A673 (cell line): ENCODE measurements at regions of chr12 and their contacts with region 1.

Region 1: GRCh38 chr12:70733385-70733784 is 96.2 kb upstream of the PTPRB start:
- DNase-seq: peak; percentile 88
- H3K4me3 ChIP-seq: no peak overlapping the region
- H3K27ac ChIP-seq: no peak overlapping the region
- H3K4me1 ChIP-seq: peaks cover 8% of the 10 kb centered on the region
- H3K27me3 ChIP-seq: no peaks in the 10 kb centered on the region
- CTCF ChIP-seq: peak; percentile 80

Region 2: DNA sequence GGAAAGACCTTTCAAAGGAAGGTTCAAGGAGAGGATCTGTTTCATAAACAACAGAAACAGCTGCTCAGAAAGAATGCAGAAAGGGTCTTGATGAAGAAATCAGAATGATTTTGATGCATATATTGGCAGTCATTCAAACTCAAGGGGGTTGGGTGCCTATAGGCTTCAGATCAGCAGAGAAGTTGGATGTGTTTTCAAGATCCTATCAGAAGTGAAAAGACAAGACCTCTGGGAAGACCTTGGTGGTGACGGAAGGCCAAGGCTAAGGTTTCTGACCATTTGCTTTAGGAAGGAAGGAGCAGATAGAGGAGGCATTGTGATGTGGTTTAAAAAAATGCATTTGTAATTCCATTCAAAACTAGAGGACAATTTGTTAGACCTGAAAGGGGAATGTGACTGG is 80.9 kb before region 1 on chr12:
- CTCF ChIA-PET with region 1: no interaction called
- POLR2A ChIA-PET with region 1: no interaction called
- intact Hi-C with region 1: no loop called
- DNase-seq: no peak
- H3K4me3 ChIP-seq: no peak overlapping the region
- H3K27ac ChIP-seq: no peak overlapping the region
- H3K4me1 ChIP-seq: no peaks in the 10 kb centered on the region
- H3K27me3 ChIP-seq: no peaks in the 10 kb centered on the region
- CTCF ChIP-seq: no peak

Region 3: GRCh38 chr12:70849265-70849960 is 116.0 kb after region 1 on chr12:
- CTCF ChIA-PET with region 1: interaction called, 3 read pairs
- POLR2A ChIA-PET with region 1: no interaction called
- intact Hi-C with region 1: loop called (anchors 2 kb)
- DNase-seq: peak; percentile 55
- H3K4me3 ChIP-seq: no peak overlapping the region
- H3K27ac ChIP-seq: no peak overlapping the region
- H3K4me1 ChIP-seq: peaks cover 29% of the 10 kb centered on the region
- H3K27me3 ChIP-seq: no peaks in the 10 kb centered on the region
- CTCF ChIP-seq: peak; percentile 71

Region 4: GRCh38 chr12:71194657-71195056 is 461.3 kb after region 1 on chr12:
- CTCF ChIA-PET with region 1: no interaction called
- POLR2A ChIA-PET with region 1: no interaction called
- intact Hi-C with region 1: loop called (anchors 2 kb)
- DNase-seq: peak; percentile 26
- H3K4me3 ChIP-seq: no peak overlapping the region
- H3K27ac ChIP-seq: peak overlapping the region; percentile 98
- H3K4me1 ChIP-seq: peaks cover 66% of the 10 kb centered on the region
- H3K27me3 ChIP-seq: no peaks in the 10 kb centered on the region
- CTCF ChIP-seq: no peak

Region 5: DNA sequence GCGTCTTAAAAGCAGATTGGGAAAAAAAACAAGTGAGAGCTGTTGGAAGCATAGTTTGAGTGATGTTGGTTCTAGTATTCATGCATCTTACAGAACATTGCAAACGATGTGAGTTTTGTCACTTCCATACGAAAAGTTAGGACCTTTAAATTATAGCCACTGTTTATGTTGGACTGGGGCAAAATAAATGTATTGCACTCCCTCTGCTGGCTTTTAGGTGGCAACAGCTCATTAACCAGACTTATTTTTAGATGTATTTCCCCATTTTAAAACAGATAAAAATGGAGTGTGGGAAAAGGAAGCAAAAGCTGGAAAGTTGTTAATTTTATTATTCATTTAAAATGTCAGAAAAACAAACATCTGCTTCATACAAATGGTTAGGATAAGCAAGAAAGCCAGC is 818.1 kb after region 1 on chr12:
- CTCF ChIA-PET with region 1: interaction called, 5 read pairs
- POLR2A ChIA-PET with region 1: no interaction called
- intact Hi-C with region 1: loop called (anchors 2 kb)
- DNase-seq: peak; percentile 58
- H3K4me3 ChIP-seq: no peak overlapping the region
- H3K27ac ChIP-seq: no peak overlapping the region
- H3K4me1 ChIP-seq: peaks cover 3% of the 10 kb centered on the region
- H3K27me3 ChIP-seq: no peaks in the 10 kb centered on the region
- CTCF ChIP-seq: peak; percentile 79

Region 6: GRCh38 chr12:71746983-71747611 is 1013.7 kb after region 1 on chr12:
- CTCF ChIA-PET with region 1: interaction called, 4 read pairs
- POLR2A ChIA-PET with region 1: no interaction called
- intact Hi-C with region 1: loop called (anchors 5 kb)
- DNase-seq: peak; percentile 79
- H3K4me3 ChIP-seq: no peak overlapping the region
- H3K27ac ChIP-seq: no peak overlapping the region
- H3K4me1 ChIP-seq: peaks cover 21% of the 10 kb centered on the region
- H3K27me3 ChIP-seq: no peaks in the 10 kb centered on the region
- CTCF ChIP-seq: peak; percentile 84